ENCODE measurements at regions of chr9 and their contacts with region 1.

Region 1: DNA sequence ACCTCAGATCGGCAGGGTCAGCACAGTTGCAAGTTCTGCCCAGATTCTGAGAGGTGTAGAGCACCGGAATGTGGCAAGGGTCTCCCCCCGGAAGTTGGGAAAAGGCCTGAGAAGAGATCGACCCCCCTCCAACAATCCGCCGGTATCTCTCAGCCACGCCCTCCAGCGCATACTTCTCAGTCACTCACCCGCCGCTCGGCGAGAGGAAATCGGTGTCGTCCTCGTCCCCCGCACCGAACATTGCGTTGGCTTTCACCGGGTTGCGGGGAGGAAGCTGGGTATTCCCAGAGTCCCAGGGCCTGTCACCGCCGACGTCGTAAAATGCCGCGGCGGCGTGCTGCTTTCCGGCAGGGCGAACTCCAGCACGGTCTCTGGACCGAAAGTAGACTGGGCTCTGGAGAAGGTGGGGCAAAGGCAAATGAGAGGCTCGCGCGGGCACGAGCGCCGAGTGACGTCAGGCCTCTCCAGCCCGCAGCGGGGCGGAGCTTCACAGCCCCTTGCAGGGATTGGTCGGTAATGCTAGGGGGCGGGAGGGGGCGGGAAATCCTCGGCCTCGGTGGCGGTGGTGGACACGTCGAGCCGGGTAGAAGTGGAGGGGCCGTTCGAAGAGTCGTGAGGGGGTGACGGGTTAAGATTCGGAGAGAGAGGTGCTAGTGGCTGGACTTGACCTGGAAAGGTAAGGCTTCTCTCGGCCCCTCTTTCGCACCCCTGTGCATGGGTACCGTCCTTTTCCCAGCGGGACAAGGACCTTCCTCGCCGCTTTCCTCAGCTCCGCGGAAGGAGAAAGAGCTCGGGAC is at the starts of genes FKBP15 and SLC31A1:
- DNase-seq: peak; percentile 88 to 96 (median 96)
- ATAC-seq: peak; percentile 99
- H3K4me3 ChIP-seq: peak within 1 kb of the TSS; percentile 91
- H3K4me3 Mint-ChIP-seq: peak within 1 kb of the TSS; percentile 89 to 99 (median 94)
- H3K27ac ChIP-seq: peak within 1 kb of the TSS; percentile 94
- H3K27ac Mint-ChIP-seq: peak within 1 kb of the TSS; percentile 86 to 98 (median 94)
- H3K4me1 ChIP-seq: peaks cover 10 to 25% of the 10 kb centered on the region in 2 donors
- H3K4me1 Mint-ChIP-seq: peaks cover 15 to 58% (median 48%) of the 10 kb centered on the region in 7 donors
- H3K27me3 ChIP-seq: no peaks in the 10 kb centered on the region
- H3K27me3 Mint-ChIP-seq: no peaks in the 10 kb centered on the region
- total RNA-seq, gene FKBP15: 22.4 to 50.6 (median 33.4) TPM
- total RNA-seq, gene SLC31A1: 4.5 to 10.4 (median 4.7) TPM

Region 2: GRCh38 chr9:112174218-112174964 is 1046.8 kb before region 1 on chr9:
- CTCF ChIA-PET with region 1: no interaction called
- POLR2A ChIA-PET with region 1: no interaction called
- intact Hi-C with region 1: loop called in 1 of 2 experiments (anchors 10 kb)
- DNase-seq: peak; percentile 42 to 80 (median 63)
- ATAC-seq: peak; percentile 87
- H3K4me3 ChIP-seq: peak overlapping the region; percentile 67
- H3K4me3 Mint-ChIP-seq: peak overlapping the region; percentile 83 to 94 (median 90)
- H3K27ac ChIP-seq: peak overlapping the region; percentile 9
- H3K27ac Mint-ChIP-seq: peak overlapping the region; percentile 65 to 95 (median 87)
- H3K4me1 ChIP-seq: peaks cover 33 to 54% of the 10 kb centered on the region in 2 donors
- H3K4me1 Mint-ChIP-seq: peaks cover 49 to 81% (median 73%) of the 10 kb centered on the region in 7 donors
- H3K27me3 ChIP-seq: no peaks in the 10 kb centered on the region
- H3K27me3 Mint-ChIP-seq: peaks cover 0 to 3% (median 0%) of the 10 kb centered on the region in 5 donors

Region 3: DNA sequence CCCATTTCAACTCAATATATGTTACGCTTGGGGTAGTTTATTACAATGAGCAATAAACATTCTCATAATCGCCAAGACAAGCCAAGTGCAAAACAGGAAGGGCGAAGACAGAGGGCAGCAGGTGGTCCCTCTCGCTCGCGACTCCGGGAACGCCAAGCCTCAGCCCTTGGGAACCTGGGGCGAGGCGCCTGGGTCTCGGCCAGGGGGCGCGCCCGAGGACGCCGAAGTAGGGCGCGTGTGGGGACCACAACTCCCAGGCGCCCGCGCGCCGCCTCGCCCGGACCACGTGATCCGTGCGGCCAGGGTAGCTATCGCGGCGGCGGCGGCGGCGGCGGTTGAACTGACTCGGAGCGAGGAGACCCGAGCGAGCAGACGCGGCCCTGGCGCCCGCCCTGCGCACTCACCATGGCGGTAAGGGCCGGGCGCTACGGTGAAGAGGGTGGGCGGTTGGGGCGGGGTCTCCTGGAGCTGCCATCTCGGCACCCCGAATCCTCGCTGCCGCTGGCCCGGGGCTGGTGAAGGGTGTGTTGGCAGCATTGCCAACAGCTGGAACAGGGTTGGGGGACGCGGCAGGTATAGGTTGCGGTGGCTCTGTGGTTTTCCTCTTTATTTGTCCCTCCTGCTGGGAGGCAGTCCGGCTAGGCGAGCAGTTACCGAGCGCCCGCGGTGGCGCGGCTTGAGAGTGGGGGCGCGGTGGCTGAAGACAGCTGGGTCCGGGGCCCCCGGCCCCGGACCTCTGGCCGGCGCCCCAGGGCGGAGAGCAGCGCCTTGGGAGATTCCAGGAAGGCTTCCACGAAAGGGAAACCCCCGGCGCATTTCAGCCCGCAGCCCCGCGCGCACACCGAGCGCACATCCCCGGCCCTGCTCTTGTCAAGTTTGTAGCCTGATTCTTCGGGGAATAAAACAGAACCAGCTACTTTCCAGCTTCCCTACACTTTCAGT is 70.3 kb before region 1 on chr9 and contains the start of gene SLC31A2:
- CTCF ChIA-PET with region 1: interaction called, 4 read pairs
- POLR2A ChIA-PET with region 1: interaction called, 6 read pairs
- intact Hi-C with region 1: loop called (anchors 1 kb)
- DNase-seq: peak; percentile 73 to 93 (median 80)
- ATAC-seq: peak; percentile 92
- H3K4me3 ChIP-seq: peak within 1 kb of the TSS; percentile 78
- H3K4me3 Mint-ChIP-seq: peak within 1 kb of the TSS; percentile 58 to 88 (median 84)
- H3K27ac ChIP-seq: peak within 1 kb of the TSS; percentile 73
- H3K27ac Mint-ChIP-seq: peak within 1 kb of the TSS; percentile 38 to 76 (median 68)
- H3K4me1 ChIP-seq: peaks cover 10 to 15% of the 10 kb centered on the region in 2 donors
- H3K4me1 Mint-ChIP-seq: peaks cover 16 to 42% (median 36%) of the 10 kb centered on the region in 7 donors
- H3K27me3 ChIP-seq: no peaks in the 10 kb centered on the region
- H3K27me3 Mint-ChIP-seq: peaks cover 1 to 6% (median 4%) of the 10 kb centered on the region in 5 donors
- total RNA-seq, gene SLC31A2: 5.3 to 39.2 (median 5.4) TPM

Region 4: GRCh38 chr9:113281356-113281755 is 60.2 kb after region 1 on chr9:
- CTCF ChIA-PET with region 1: no interaction called
- POLR2A ChIA-PET with region 1: no interaction called
- intact Hi-C with region 1: no loop called
- DNase-seq: no peak
- ATAC-seq: no peak
- H3K4me3 ChIP-seq: no peak overlapping the region
- H3K4me3 Mint-ChIP-seq: no peak overlapping the region
- H3K27ac ChIP-seq: no peak overlapping the region
- H3K27ac Mint-ChIP-seq: peak overlapping the region in 4 of 9 donors; percentile 1 to 62 (median 36)
- H3K4me1 ChIP-seq: peaks cover 2% of the 10 kb centered on the region in 2 donors
- H3K4me1 Mint-ChIP-seq: peaks cover 11 to 39% (median 26%) of the 10 kb centered on the region in 7 donors
- H3K27me3 ChIP-seq: no peaks in the 10 kb centered on the region
- H3K27me3 Mint-ChIP-seq: no peaks in the 10 kb centered on the region

Region 5: GRCh38 chr9:113349445-113350094 is 128.4 kb after region 1 on chr9 and contains the start of gene BSPRY:
- CTCF ChIA-PET with region 1: no interaction called
- POLR2A ChIA-PET with region 1: no interaction called
- intact Hi-C with region 1: loop called (anchors 2 to 5 kb)
- DNase-seq: peak in 7 of 9 donors; percentile 27 to 67 (median 44)
- ATAC-seq: peak; percentile 70
- H3K4me3 ChIP-seq: peak within 1 kb of the TSS; percentile 54
- H3K4me3 Mint-ChIP-seq: peak within 1 kb of the TSS; percentile 73 to 93 (median 81)
- H3K27ac ChIP-seq: no peak within 1 kb of the TSS
- H3K27ac Mint-ChIP-seq: peak within 1 kb of the TSS in 3 of 9 donors; percentile 5 to 87 (median 57)
- H3K4me1 ChIP-seq: peaks cover 13 to 15% of the 10 kb centered on the region in 2 donors
- H3K4me1 Mint-ChIP-seq: peaks cover 10 to 49% (median 21%) of the 10 kb centered on the region in 7 donors
- H3K27me3 ChIP-seq: peaks cover 3 to 5% of the 10 kb centered on the region in 2 donors
- H3K27me3 Mint-ChIP-seq: peaks cover 0 to 40% (median 29%) of the 10 kb centered on the region in 5 donors
- total RNA-seq, gene BSPRY: 0.13 to 9.6 (median 1.2) TPM in 3 of 5 experiments, not detected in the others

Region 6: GRCh38 chr9:113436728-113437471 is 215.7 kb after region 1 on chr9:
- CTCF ChIA-PET with region 1: no interaction called
- POLR2A ChIA-PET with region 1: no interaction called
- intact Hi-C with region 1: no loop called
- DNase-seq: no peak
- ATAC-seq: no peak
- H3K4me3 ChIP-seq: no peak overlapping the region
- H3K4me3 Mint-ChIP-seq: no peak overlapping the region
- H3K27ac ChIP-seq: no peak overlapping the region
- H3K27ac Mint-ChIP-seq: no peak overlapping the region
- H3K4me1 ChIP-seq: no peaks in the 10 kb centered on the region
- H3K4me1 Mint-ChIP-seq: peaks cover 0 to 4% (median 0%) of the 10 kb centered on the region in 7 donors
- H3K27me3 ChIP-seq: no peaks in the 10 kb centered on the region
- H3K27me3 Mint-ChIP-seq: peaks cover 0 to 31% (median 0%) of the 10 kb centered on the region in 5 donors

Region 7: DNA sequence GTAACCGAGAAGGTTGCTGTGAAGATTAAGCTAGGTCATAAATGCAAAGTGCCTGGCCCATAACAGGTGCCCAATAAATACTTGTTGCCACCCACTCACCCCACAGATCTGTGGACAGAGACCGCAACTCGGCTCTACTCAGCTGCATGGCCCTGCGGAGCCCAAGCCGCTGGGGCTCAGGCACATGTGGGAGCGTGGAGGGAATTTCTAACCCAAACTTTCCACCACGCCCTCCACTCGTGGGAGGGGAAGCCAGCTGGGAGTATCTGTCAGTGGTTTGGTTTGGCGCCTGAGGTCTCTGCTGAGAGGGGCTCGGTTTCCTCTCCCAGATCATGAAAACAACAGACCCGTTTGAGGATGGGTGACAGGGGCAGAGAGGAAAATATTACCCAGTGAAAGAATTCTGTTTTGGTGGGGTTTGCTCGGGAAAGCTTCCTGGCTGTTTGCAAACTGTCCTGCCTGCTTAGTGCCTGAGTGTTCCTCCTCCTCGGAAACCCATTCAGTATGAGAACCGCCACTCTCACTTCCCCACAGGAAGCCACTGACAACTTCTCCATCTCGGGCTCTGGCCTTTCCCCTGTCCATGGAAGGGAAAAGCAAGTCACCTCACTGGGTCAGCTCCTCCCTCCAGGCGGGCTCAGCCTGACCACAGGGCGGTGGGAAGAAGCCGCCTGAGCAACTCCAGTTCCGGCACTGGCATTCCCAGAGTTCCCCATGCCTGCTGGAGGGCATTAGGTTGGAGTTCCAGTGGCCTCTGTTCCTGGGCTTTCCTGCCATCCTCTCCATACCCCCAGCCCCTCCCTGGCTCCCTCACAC is 302.4 kb after region 1 on chr9:
- CTCF ChIA-PET with region 1: no interaction called
- POLR2A ChIA-PET with region 1: no interaction called
- intact Hi-C with region 1: loop called in 1 of 2 experiments (anchors 5 kb)
- DNase-seq: peak in 2 of 9 donors; percentile 27 to 84
- ATAC-seq: peak; percentile 63
- H3K4me3 ChIP-seq: peak overlapping the region; percentile 53
- H3K4me3 Mint-ChIP-seq: peak overlapping the region; percentile 54 to 80 (median 70)
- H3K27ac ChIP-seq: peak overlapping the region; percentile 42
- H3K27ac Mint-ChIP-seq: peak overlapping the region; percentile 64 to 91 (median 79)
- H3K4me1 ChIP-seq: peaks cover 65 to 79% of the 10 kb centered on the region in 2 donors
- H3K4me1 Mint-ChIP-seq: peaks cover 61 to 87% (median 71%) of the 10 kb centered on the region in 7 donors
- H3K27me3 ChIP-seq: no peaks in the 10 kb centered on the region
- H3K27me3 Mint-ChIP-seq: no peaks in the 10 kb centered on the region